Activated CD4-positive, alpha-beta T cell treated with anti-CD3 and anti-CD28 coated beads, Interleukin-2, amount 10 ng/mL, durations not matched to agents 24 days and 14 days (primary cell): ENCODE measurements at regions of chr3 and their contacts with region 1.

Region 1: GRCh38 chr3:136893848-136894443 is 31.9 kb downstream of the NCK1 start:
- DNase-seq: peak; percentile 45
- H3K4me3 Mint-ChIP-seq: no peak overlapping the region
- H3K27ac Mint-ChIP-seq: no peak overlapping the region
- H3K4me1 Mint-ChIP-seq: peaks cover 26% of the 10 kb centered on the region
- H3K27me3 Mint-ChIP-seq: no peaks in the 10 kb centered on the region

Region 2: DNA sequence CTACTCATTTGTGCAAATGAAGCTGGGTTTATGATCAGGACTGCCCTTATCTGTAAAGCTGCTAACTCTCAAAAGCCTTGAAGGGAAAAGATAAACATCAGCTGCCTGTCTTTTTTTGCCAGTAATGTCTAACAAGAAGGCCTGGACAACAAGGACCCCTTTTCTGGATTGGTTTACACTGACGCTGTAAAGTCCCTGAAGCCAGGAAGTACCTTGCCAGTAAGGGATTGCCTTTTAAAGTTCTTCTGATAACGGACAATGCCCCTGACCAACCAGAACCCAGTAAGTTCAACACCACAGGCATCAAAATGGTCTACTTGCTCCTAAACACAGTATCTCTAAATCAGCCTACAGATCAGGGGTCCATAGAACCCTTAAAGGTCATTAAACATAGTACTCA is 465.8 kb before region 1 on chr3:
- intact Hi-C with region 1: no loop called
- DNase-seq: no peak
- H3K4me3 Mint-ChIP-seq: no peak overlapping the region
- H3K27ac Mint-ChIP-seq: no peak overlapping the region
- H3K4me1 Mint-ChIP-seq: no peaks in the 10 kb centered on the region
- H3K27me3 Mint-ChIP-seq: no peaks in the 10 kb centered on the region

Region 3: GRCh38 chr3:136577792-136578191 is 316.2 kb before region 1 on chr3:
- intact Hi-C with region 1: no loop called
- DNase-seq: no peak
- H3K4me3 Mint-ChIP-seq: no peak overlapping the region
- H3K27ac Mint-ChIP-seq: no peak overlapping the region
- H3K4me1 Mint-ChIP-seq: no peaks in the 10 kb centered on the region
- H3K27me3 Mint-ChIP-seq: no peaks in the 10 kb centered on the region

Region 4: GRCh38 chr3:136909187-136909586 is 15.2 kb after region 1 on chr3:
- intact Hi-C with region 1: loop called (anchors 2 kb)
- DNase-seq: no peak
- H3K4me3 Mint-ChIP-seq: no peak overlapping the region
- H3K27ac Mint-ChIP-seq: no peak overlapping the region
- H3K4me1 Mint-ChIP-seq: peaks cover 34% of the 10 kb centered on the region
- H3K27me3 Mint-ChIP-seq: no peaks in the 10 kb centered on the region